Activated CD8-positive, alpha-beta T cell treated with anti-CD3 and anti-CD28 coated beads, Interleukin-2, amount 10 ng/mL, durations not matched to agents 7 days and 5 days (primary cell): ENCODE measurements at regions of chr3 and their contacts with region 1.

Region 1: DNA sequence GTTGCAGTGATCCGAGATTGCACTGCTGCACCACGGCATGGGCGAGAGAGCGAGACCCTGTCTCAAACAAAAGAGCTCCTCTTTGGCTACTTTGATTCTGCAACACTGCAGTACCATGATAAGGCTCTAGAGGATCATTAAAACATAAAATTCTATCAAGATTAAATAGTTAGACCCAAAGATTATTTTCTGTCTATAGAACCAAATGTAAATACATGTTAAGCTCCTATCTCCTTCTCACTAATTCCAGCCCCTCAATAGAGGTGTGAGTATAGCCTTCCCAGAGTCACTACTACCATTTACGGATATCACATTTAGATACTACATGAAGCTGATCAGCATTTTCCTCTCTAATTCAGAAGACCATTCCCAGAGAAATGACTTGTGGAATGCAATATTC is 4.3 kb upstream of the MUC13 start:
- DNase-seq: no peak
- ATAC-seq: no peak
- H3K4me3 Mint-ChIP-seq: no peak overlapping the region
- H3K27ac Mint-ChIP-seq: no peak overlapping the region
- H3K4me1 Mint-ChIP-seq: no peaks in the 10 kb centered on the region
- H3K27me3 Mint-ChIP-seq: peaks cover 31% of the 10 kb centered on the region

Region 2: GRCh38 chr3:124928333-124929202 is 10.3 kb before region 1 on chr3:
- CTCF ChIA-PET with region 1: interaction called, 10 read pairs
- POLR2A ChIA-PET with region 1: no interaction called
- DNase-seq: peak; percentile 78
- ATAC-seq: peak; percentile 77
- H3K4me3 Mint-ChIP-seq: no peak overlapping the region
- H3K27ac Mint-ChIP-seq: no peak overlapping the region
- H3K4me1 Mint-ChIP-seq: peaks cover 14% of the 10 kb centered on the region
- H3K27me3 Mint-ChIP-seq: peaks cover 45% of the 10 kb centered on the region